ENCODE measurements at regions of chr5 and their contacts with region 1.

Region 1: GRCh38 chr5:43040287-43041098 is at the start of gene ANXA2R:
- DNase-seq: peak; percentile 98
- H3K4me3 Mint-ChIP-seq: peak within 1 kb of the TSS; percentile 94
- H3K27ac Mint-ChIP-seq: peak within 1 kb of the TSS; percentile 96
- H3K4me1 Mint-ChIP-seq: peaks cover 46% of the 10 kb centered on the region
- H3K27me3 Mint-ChIP-seq: no peaks in the 10 kb centered on the region
- total RNA-seq, gene ANXA2R: 1.1 and 1.2 TPM in 2 replicates

Region 2: DNA sequence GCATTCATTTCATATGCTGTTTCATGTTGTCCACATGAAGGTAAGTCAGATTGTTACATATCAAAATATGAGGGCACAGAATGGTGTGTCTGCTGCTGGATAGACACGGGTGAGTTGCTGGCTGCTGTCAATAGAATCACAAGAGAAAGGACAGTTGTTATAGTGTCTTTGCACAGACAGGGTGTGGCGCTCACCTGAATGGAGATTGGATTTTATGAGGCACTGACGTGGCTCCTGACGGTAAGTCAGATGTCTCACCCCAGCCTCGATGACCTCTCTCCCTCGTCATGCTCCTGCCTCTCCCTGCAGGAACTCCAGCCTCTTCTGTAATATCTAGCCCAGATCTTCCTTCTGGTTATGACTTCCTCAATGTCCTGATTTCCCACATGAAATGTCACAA is 153.4 kb before region 1 on chr5:
- intact Hi-C with region 1: no loop called
- DNase-seq: no peak
- H3K4me3 Mint-ChIP-seq: no peak overlapping the region
- H3K27ac Mint-ChIP-seq: no peak overlapping the region
- H3K4me1 Mint-ChIP-seq: no peaks in the 10 kb centered on the region
- H3K27me3 Mint-ChIP-seq: peaks cover 17% of the 10 kb centered on the region

Region 3: GRCh38 chr5:42994246-42995151 is 46.0 kb before region 1 on chr5:
- intact Hi-C with region 1: loop called (anchors 1 kb)
- DNase-seq: peak; percentile 97
- H3K4me3 Mint-ChIP-seq: peak overlapping the region; percentile 96
- H3K27ac Mint-ChIP-seq: peak overlapping the region; percentile 100
- H3K4me1 Mint-ChIP-seq: peaks cover 40% of the 10 kb centered on the region
- H3K27me3 Mint-ChIP-seq: no peaks in the 10 kb centered on the region

Region 4: GRCh38 chr5:43051668-43052067 is 11.2 kb after region 1 on chr5:
- intact Hi-C with region 1: no loop called
- DNase-seq: no peak
- H3K4me3 Mint-ChIP-seq: no peak overlapping the region
- H3K27ac Mint-ChIP-seq: no peak overlapping the region
- H3K4me1 Mint-ChIP-seq: peaks cover 4% of the 10 kb centered on the region
- H3K27me3 Mint-ChIP-seq: peaks cover 5% of the 10 kb centered on the region